ENCODE measurements at regions of chr14 and their contacts with region 1.

Region 1: GRCh38 chr14:92712654-92713051 is 35.8 kb downstream of the LGMN start:
- DNase-seq: no peak
- H3K4me3 ChIP-seq: no peak overlapping the region
- H3K27ac ChIP-seq: no peak overlapping the region
- H3K4me1 ChIP-seq: peaks cover 0 to 2% (median 0%) of the 10 kb centered on the region in 4 donors
- H3K27me3 ChIP-seq: no peaks in the 10 kb centered on the region
- CTCF ChIP-seq: no peak
- EP300 ChIP-seq: no peak
- POLR2A ChIP-seq: no peak

Region 2: GRCh38 chr14:92783816-92784431 is 71.3 kb after region 1 on chr14:
- intact Hi-C with region 1: loop called (anchors 5 kb)
- DNase-seq: peak in 1 of 2 donors; percentile 80
- H3K4me3 ChIP-seq: no peak overlapping the region
- H3K27ac ChIP-seq: peak overlapping the region in 1 of 5 donors; percentile 56
- H3K4me1 ChIP-seq: peaks cover 11 to 31% (median 23%) of the 10 kb centered on the region in 4 donors
- H3K27me3 ChIP-seq: no peaks in the 10 kb centered on the region
- CTCF ChIP-seq: peak in 5 of 7 experiments; percentile 34 to 75 (median 48)
- EP300 ChIP-seq: no peak
- POLR2A ChIP-seq: no peak